ENCODE measurements at regions of chr14 and their contacts with region 1.

Region 1: GRCh38 chr14:53306267-53306721 is 153.2 kb upstream of the DDHD1 start:
- DNase-seq: peak; percentile 69
- ATAC-seq: peak; percentile 88
- H3K4me3 ChIP-seq: peak overlapping the region; percentile 86
- H3K27ac ChIP-seq: no peak overlapping the region
- H3K4me1 ChIP-seq: peaks cover 8% of the 10 kb centered on the region; the same call in 1 of the 2 replicates
- H3K27me3 ChIP-seq: no peaks in the 10 kb centered on the region
- CTCF ChIP-seq: peak; percentile 94

Region 2: GRCh38 chr14:52552063-52552988 is 754.0 kb before region 1 on chr14 and contains the starts of genes GPR137C and TXNDC16:
- CTCF ChIA-PET with region 1: no interaction called
- POLR2A ChIA-PET with region 1: no interaction called
- intact Hi-C with region 1: loop called (anchors 10 kb)
- DNase-seq: peak; percentile 100
- ATAC-seq: peak; percentile 91
- H3K4me3 ChIP-seq: peak within 1 kb of the TSS; percentile 87
- H3K27ac ChIP-seq: peak within 1 kb of the TSS; percentile 10; the same call in 1 of the 2 replicates
- H3K4me1 ChIP-seq: peaks cover 20% of the 10 kb centered on the region
- H3K27me3 ChIP-seq: no peaks in the 10 kb centered on the region
- CTCF ChIP-seq: no peak
- total RNA-seq, gene GPR137C: 0.63 and 0.91 TPM in 2 replicates
- total RNA-seq, gene TXNDC16: 3.9 and 4.0 TPM in 2 replicates

Region 3: GRCh38 chr14:52961060-52961639 is 345.1 kb before region 1 on chr14:
- CTCF ChIA-PET with region 1: interaction called, 5 read pairs
- POLR2A ChIA-PET with region 1: no interaction called
- intact Hi-C with region 1: loop called (anchors 2 kb)
- DNase-seq: peak; percentile 88
- ATAC-seq: peak; percentile 90
- H3K4me3 ChIP-seq: peak overlapping the region; percentile 8; the same call in 1 of the 2 replicates
- H3K27ac ChIP-seq: peak overlapping the region; percentile 58
- H3K4me1 ChIP-seq: peaks cover 23% of the 10 kb centered on the region
- H3K27me3 ChIP-seq: no peaks in the 10 kb centered on the region
- CTCF ChIP-seq: peak; percentile 90

Region 4: DNA sequence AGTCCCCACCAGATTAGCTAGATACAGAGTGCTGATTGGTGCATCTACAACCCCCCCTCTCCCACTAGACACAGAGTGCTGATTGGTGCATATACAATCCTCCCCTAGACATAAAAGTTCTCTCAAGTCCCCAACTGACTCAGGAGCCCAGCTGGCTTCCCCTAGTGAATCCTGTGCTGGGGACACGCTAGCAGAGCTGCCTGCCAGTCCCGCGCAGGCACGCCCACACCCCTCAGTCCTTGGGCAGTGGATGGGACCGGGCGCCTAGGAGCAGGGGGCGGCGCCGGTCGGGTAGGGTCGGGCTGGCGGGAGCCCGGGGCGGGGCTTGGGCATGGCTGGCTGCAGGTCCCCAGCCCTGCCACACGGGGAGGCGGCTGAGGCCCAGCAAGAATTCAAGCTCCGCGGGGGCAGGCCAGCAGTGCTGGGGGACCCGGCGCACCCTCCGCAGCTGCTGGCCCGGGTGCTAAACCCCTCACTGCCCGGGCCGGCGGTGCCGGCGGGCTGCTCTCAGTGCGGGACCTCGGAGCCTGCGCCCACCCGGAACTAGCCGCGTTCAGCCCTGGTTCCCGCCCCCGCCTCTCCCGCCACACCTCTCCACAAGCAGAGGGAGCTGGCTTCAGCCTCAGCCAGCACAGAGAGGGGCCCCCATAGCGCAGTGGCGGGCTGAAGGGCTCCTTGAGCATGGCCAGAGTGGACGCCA is 88.8 kb before region 1 on chr14:
- CTCF ChIA-PET with region 1: interaction called, 4 read pairs
- POLR2A ChIA-PET with region 1: no interaction called
- intact Hi-C with region 1: loop called (anchors 5 kb)
- DNase-seq: peak; percentile 71
- ATAC-seq: peak; percentile 99
- H3K4me3 ChIP-seq: peak overlapping the region; percentile 84
- H3K27ac ChIP-seq: no peak overlapping the region
- H3K4me1 ChIP-seq: peaks cover 6% of the 10 kb centered on the region
- H3K27me3 ChIP-seq: no peaks in the 10 kb centered on the region
- CTCF ChIP-seq: peak; percentile 54; the same call in 1 of the 2 replicates

Region 5: GRCh38 chr14:53325176-53325806 is 19.0 kb after region 1 on chr14:
- CTCF ChIA-PET with region 1: interaction called, 12 read pairs
- POLR2A ChIA-PET with region 1: interaction called, 6 read pairs
- intact Hi-C with region 1: loop called (anchors 1 kb)
- DNase-seq: peak; percentile 27
- ATAC-seq: peak; percentile 59
- H3K4me3 ChIP-seq: no peak overlapping the region
- H3K27ac ChIP-seq: no peak overlapping the region
- H3K4me1 ChIP-seq: peaks cover 16% of the 10 kb centered on the region
- H3K27me3 ChIP-seq: no peaks in the 10 kb centered on the region
- CTCF ChIP-seq: peak; percentile 52; the same call in 1 of the 2 replicates

Region 6: DNA sequence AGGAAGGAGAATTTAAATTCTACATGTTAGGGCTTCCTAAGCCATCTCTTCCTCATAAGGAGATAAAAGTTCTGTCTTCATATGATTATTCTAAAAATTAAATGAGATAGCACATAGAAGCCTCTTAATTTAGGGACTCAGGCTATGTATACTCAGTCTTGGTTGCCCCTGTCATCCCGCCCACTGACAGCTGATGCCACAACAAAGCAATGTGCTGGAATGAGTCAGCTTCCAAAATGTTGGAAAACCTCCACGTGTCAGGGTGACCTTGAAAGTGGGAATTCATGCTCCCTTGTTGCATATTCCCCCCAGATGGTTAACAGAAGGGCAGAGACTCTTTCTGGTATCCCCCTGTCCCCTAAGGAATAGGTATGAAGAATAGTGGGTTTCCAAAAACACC is 84.9 kb after region 1 on chr14:
- CTCF ChIA-PET with region 1: no interaction called
- POLR2A ChIA-PET with region 1: no interaction called
- intact Hi-C with region 1: loop called (anchors 2 kb)
- DNase-seq: peak; percentile 60
- ATAC-seq: peak; percentile 66
- H3K4me3 ChIP-seq: no peak overlapping the region
- H3K27ac ChIP-seq: peak overlapping the region; percentile 65
- H3K4me1 ChIP-seq: peaks cover 24% of the 10 kb centered on the region
- H3K27me3 ChIP-seq: no peaks in the 10 kb centered on the region
- CTCF ChIP-seq: no peak

Measured in PC-3 (cell line).